Common myeloid progenitor, CD34-positive (primary cell): ENCODE measurements at regions of chr22 and their contacts with region 1.

Region 1: DNA sequence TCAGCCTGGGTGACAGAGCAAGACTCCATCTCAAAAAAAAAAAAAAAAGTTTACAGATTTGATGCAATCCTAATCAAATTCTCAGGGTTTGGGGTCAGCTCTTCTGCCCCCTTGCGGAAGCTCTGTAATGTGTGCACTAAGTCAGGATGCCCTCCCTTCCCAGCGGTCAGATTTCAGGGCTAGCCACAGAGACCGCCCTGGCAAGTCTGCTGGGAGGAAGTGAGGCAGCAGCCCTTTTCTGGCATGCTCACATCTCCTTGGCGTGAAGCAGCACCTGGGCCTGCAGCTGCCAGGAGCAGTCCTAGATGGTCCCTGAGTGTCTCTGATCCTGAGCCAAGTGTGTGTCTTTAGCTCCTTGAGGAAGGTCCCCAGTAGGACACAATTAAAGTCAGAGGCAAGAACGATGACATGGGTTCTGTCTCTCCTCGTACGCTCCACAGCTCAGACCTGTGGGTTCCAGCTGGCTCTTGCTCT is 10.9 kb upstream of the APOBEC3C start:
- DNase-seq: peak; percentile 92 to 97 (median 95)
- H3K4me3 ChIP-seq: no peak overlapping the region
- H3K27ac ChIP-seq: no peak overlapping the region
- H3K4me1 ChIP-seq: peaks cover 0 to 8% (median 5%) of the 10 kb centered on the region in 4 experiments
- H3K27me3 ChIP-seq: peaks cover 0 to 9% (median 0%) of the 10 kb centered on the region in 5 experiments

Region 2: GRCh38 chr22:38973289-38974169 is 29.7 kb before region 1 on chr22:
- CTCF ChIA-PET with region 1: interaction called, 40 read pairs
- POLR2A ChIA-PET with region 1: no interaction called
- DNase-seq: peak in 2 of 3 donors; percentile 68 to 74
- H3K4me3 ChIP-seq: no peak overlapping the region
- H3K27ac ChIP-seq: no peak overlapping the region
- H3K4me1 ChIP-seq: peaks cover 0 to 2% (median 0%) of the 10 kb centered on the region in 4 experiments
- H3K27me3 ChIP-seq: peaks cover 0 to 3% (median 0%) of the 10 kb centered on the region in 5 experiments

Region 3: GRCh38 chr22:38981992-38982927 is 20.9 kb before region 1 on chr22 and contains the start of gene APOBEC3B:
- CTCF ChIA-PET with region 1: interaction called, 11 read pairs
- POLR2A ChIA-PET with region 1: no interaction called
- DNase-seq: peak; percentile 72 to 94 (median 92)
- H3K4me3 ChIP-seq: peak within 1 kb of the TSS; percentile 4 to 79 (median 54)
- H3K27ac ChIP-seq: no peak within 1 kb of the TSS
- H3K4me1 ChIP-seq: peaks cover 0 to 21% (median 11%) of the 10 kb centered on the region in 4 experiments
- H3K27me3 ChIP-seq: no peaks in the 10 kb centered on the region

Region 4: GRCh38 chr22:39021552-39022250 is 18.5 kb after region 1 on chr22:
- CTCF ChIA-PET with region 1: no interaction called
- POLR2A ChIA-PET with region 1: no interaction called
- DNase-seq: no peak
- H3K4me3 ChIP-seq: peak overlapping the region; percentile 38 to 76 (median 63)
- H3K27ac ChIP-seq: peak overlapping the region in 1 of 2 experiments; percentile 71
- H3K4me1 ChIP-seq: peaks cover 0 to 20% (median 19%) of the 10 kb centered on the region in 4 experiments
- H3K27me3 ChIP-seq: no peaks in the 10 kb centered on the region